Activated CD4-positive, alpha-beta memory T cell treated with anti-CD3 and anti-CD28 coated beads for 36 hours (primary cell): ENCODE measurements at regions of chr7 and their contacts with region 1.

Region 1: DNA sequence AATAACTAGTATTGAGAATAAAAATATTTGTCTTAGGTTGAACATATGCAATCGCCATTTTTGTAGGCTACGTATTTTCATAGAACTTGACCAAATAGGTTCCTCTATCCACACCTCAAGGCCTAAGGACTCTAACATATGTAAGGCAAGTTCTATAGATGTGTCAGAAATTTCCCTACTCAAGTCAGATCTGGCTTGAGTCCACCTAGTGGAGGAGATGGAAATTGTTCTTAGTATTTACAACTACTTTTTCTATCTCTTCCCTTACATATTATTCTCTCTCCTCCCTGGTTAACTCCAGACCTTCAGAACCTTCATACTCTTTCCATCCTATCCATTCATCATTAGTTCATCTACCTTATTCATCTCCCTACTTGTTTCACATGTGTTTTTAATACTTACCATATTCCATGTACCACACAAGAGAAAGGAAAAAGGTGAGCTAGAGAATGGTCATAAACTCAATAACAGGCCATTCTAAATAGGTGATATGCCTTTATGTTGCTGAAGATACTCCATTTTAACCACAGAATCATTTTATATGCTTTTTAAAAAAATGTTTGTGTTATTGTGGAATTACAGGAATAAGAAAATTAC is 174.5 kb upstream of the HDAC9 start:
- DNase-seq: no peak
- H3K4me3 Mint-ChIP-seq: no peak overlapping the region
- H3K27ac Mint-ChIP-seq: no peak overlapping the region
- H3K4me1 Mint-ChIP-seq: no peaks in the 10 kb centered on the region
- H3K27me3 Mint-ChIP-seq: peaks cover 4% of the 10 kb centered on the region

Region 2: DNA sequence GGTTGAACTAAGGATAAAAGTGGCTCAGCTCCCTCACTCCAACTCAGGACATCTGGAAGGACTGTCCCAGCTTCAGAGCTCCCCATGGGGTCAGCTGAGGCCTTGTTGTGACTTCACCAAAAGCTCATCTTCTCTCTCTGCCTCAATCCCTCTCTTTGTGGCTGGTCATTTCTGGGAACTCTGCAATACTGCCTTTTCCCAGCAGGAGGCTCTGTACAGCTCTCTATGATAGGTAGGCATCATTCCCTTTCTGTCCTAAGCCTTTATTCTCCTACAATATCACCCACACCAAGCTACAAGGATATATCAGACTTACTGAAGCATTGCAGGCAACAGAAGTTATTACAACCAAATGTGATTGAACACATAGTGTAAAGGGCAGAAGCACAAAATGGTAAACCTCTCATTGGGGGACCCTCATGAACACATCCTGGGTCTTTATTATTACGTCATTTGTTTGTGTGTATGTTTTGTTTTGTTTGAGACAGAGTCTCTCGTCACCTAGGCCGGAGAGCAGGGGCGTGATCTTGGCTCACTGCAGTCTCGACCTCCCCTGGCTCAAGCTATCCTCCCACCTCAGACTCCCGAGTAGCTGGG is 256.7 kb before region 1 on chr7:
- CTCF ChIA-PET with region 1: interaction called, 3 read pairs
- POLR2A ChIA-PET with region 1: no interaction called
- intact Hi-C with region 1: loop called (anchors 10 kb)
- DNase-seq: no peak
- H3K4me3 Mint-ChIP-seq: no peak overlapping the region
- H3K27ac Mint-ChIP-seq: no peak overlapping the region
- H3K4me1 Mint-ChIP-seq: no peaks in the 10 kb centered on the region
- H3K27me3 Mint-ChIP-seq: peaks cover 7% of the 10 kb centered on the region

Region 3: GRCh38 chr7:18753972-18754610 is 433.0 kb after region 1 on chr7:
- CTCF ChIA-PET with region 1: no interaction called
- POLR2A ChIA-PET with region 1: no interaction called
- intact Hi-C with region 1: no loop called
- DNase-seq: no peak
- H3K4me3 Mint-ChIP-seq: no peak overlapping the region
- H3K27ac Mint-ChIP-seq: no peak overlapping the region
- H3K4me1 Mint-ChIP-seq: no peaks in the 10 kb centered on the region
- H3K27me3 Mint-ChIP-seq: no peaks in the 10 kb centered on the region